ENCODE measurements at regions of chr2 and their contacts with region 1.

Region 1: GRCh38 chr2:100562732-100563720 is at the start of gene PDCL3:
- DNase-seq: peak; percentile 99
- ATAC-seq: peak; percentile 97
- H3K4me3 ChIP-seq: peak within 1 kb of the TSS; percentile 73
- H3K27ac ChIP-seq: peak within 1 kb of the TSS; percentile 94
- H3K4me1 ChIP-seq: peaks cover 7% of the 10 kb centered on the region
- H3K27me3 ChIP-seq: no peaks in the 10 kb centered on the region
- CTCF ChIP-seq: 0 out of 2 replicates have a peak, but pooled peaks have one; percentile 3
- POLR2A ChIP-seq: no peak; the same call in 1 of the 2 replicates
- RAD21 ChIP-seq: no peak
- total RNA-seq, gene PDCL3: 9.5 and 22.8 TPM in 2 replicates

Region 2: DNA sequence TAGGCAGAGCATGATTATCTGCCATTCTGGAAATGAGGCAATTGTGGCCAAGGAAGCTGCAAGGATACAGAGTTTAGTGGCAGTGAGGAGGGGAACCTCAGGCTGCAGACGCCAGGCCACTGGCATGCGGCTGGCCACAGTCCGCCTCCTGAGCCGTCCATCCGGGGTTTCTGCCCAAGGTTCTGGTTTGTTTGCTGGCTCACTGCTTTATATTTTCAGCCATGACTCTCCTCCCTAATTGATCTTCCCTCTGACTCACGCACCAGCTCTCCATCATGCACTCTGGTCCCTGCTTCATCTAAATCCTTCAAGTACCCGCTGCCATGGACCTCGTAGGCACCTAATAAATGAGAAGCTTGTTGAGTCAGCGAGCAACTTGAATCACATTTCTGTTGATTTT is 965.4 kb before region 1 on chr2:
- CTCF ChIA-PET with region 1: no interaction called
- POLR2A ChIA-PET with region 1: interaction called, 10 read pairs
- dilution Hi-C with region 1: no loop called
- in situ Hi-C with region 1: no loop called
- intact Hi-C with region 1: no loop called
- DNase-seq: peak; percentile 71
- ATAC-seq: peak; percentile 18; the same call in 1 of the 2 replicates
- H3K4me3 ChIP-seq: no peak overlapping the region
- H3K27ac ChIP-seq: no peak overlapping the region
- H3K4me1 ChIP-seq: peaks cover 14% of the 10 kb centered on the region
- H3K27me3 ChIP-seq: no peaks in the 10 kb centered on the region
- CTCF ChIP-seq: no peak
- POLR2A ChIP-seq: no peak
- RAD21 ChIP-seq: no peak

Region 3: GRCh38 chr2:100142393-100142792 is 420.6 kb before region 1 on chr2 and contains the start of gene AFF3:
- CTCF ChIA-PET with region 1: no interaction called
- POLR2A ChIA-PET with region 1: no interaction called
- dilution Hi-C with region 1: no loop called
- in situ Hi-C with region 1: no loop called
- intact Hi-C with region 1: no loop called
- DNase-seq: no peak
- ATAC-seq: no peak
- H3K4me3 ChIP-seq: no peak within 1 kb of the TSS
- H3K27ac ChIP-seq: no peak within 1 kb of the TSS
- H3K4me1 ChIP-seq: no peaks in the 10 kb centered on the region
- H3K27me3 ChIP-seq: peaks cover 16% of the 10 kb centered on the region
- CTCF ChIP-seq: no peak
- POLR2A ChIP-seq: no peak
- RAD21 ChIP-seq: no peak
- total RNA-seq, gene AFF3: 13.9 and 14.3 TPM in 2 replicates

Region 4: GRCh38 chr2:100242891-100243619 is 320.0 kb before region 1 on chr2:
- CTCF ChIA-PET with region 1: no interaction called
- POLR2A ChIA-PET with region 1: no interaction called
- dilution Hi-C with region 1: no loop called
- in situ Hi-C with region 1: no loop called
- intact Hi-C with region 1: no loop called
- DNase-seq: peak; percentile 70
- ATAC-seq: peak; percentile 92
- H3K4me3 ChIP-seq: no peak overlapping the region
- H3K27ac ChIP-seq: peak overlapping the region; percentile 23; the same call in 1 of the 2 replicates
- H3K4me1 ChIP-seq: peaks cover 16% of the 10 kb centered on the region
- H3K27me3 ChIP-seq: no peaks in the 10 kb centered on the region
- CTCF ChIP-seq: peak; percentile 83
- POLR2A ChIP-seq: no peak
- RAD21 ChIP-seq: peak; percentile 97

Region 5: DNA sequence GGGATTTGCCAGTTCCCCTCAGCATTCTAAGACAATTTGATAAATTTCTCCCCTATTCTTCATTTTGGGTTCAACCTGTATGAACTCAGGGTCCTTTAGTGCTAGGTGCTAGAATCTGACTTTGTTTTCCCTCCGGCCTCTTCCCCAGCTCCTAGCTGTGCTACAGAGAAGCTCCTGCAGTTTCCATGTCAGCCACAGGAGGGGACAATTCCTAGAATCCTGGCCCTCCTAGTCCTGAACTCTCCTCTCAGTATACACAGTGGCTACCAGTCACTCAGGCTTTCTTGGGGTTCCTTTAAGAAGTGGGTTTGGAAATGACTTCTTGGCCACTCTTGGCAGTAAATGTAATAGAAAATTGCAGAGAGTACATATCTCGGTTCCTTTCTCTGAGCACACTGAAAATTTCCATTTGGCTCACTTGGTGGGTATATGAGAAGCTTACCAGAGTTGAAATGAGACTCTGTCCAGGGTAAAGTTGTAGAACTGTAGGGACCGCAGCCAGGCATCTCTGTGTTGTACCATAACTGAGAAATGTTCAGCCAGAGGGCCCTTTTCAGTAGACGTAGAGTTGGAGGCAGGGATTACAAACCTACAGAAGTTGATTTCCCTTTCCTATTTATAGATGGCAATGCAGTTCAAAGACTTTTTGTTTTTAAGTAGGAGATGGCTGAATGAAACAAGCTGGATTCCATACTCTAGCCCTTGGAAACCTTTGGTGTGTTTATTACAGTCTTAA is 140.5 kb before region 1 on chr2:
- CTCF ChIA-PET with region 1: no interaction called
- POLR2A ChIA-PET with region 1: no interaction called
- dilution Hi-C with region 1: no loop called
- in situ Hi-C with region 1: no loop called
- intact Hi-C with region 1: loop called (anchors 2 kb)
- DNase-seq: peak; percentile 36
- ATAC-seq: peak; percentile 86
- H3K4me3 ChIP-seq: no peak overlapping the region
- H3K27ac ChIP-seq: no peak overlapping the region
- H3K4me1 ChIP-seq: no peaks in the 10 kb centered on the region
- H3K27me3 ChIP-seq: peaks cover 21% of the 10 kb centered on the region
- CTCF ChIP-seq: peak; percentile 50
- POLR2A ChIP-seq: no peak
- RAD21 ChIP-seq: 0 out of 2 replicates have a peak, but pooled peaks have one; percentile 17

Region 6: GRCh38 chr2:100577777-100578176 is 14.8 kb after region 1 on chr2:
- CTCF ChIA-PET with region 1: no interaction called
- POLR2A ChIA-PET with region 1: interaction called, 10 read pairs
- dilution Hi-C with region 1: no loop called
- in situ Hi-C with region 1: no loop called
- intact Hi-C with region 1: no loop called
- DNase-seq: no peak
- ATAC-seq: no peak
- H3K4me3 ChIP-seq: no peak overlapping the region
- H3K27ac ChIP-seq: no peak overlapping the region
- H3K4me1 ChIP-seq: no peaks in the 10 kb centered on the region
- H3K27me3 ChIP-seq: no peaks in the 10 kb centered on the region
- CTCF ChIP-seq: no peak
- POLR2A ChIP-seq: no peak
- RAD21 ChIP-seq: no peak

Region 7: DNA sequence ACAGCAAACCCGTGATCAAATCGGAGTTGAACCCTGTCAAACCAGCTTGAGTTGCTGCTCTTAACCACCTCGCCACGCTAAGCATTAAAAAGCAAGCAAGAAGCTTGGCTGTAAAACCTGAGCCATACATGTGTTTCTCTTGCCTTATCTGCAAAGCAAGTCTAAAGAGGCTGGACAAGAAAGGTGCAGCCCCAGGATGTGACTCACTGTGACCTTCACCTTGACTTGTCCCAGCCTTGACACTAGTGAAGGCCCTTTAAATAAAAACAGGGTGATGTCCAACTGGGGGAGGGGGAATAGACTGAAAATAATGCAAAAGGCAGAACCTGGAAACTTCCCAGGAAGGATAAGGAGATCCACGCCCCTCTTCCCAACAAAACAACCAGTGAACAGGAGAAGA is 129.4 kb after region 1 on chr2:
- CTCF ChIA-PET with region 1: no interaction called
- POLR2A ChIA-PET with region 1: no interaction called
- dilution Hi-C with region 1: no loop called
- in situ Hi-C with region 1: no loop called
- intact Hi-C with region 1: no loop called
- DNase-seq: no peak
- ATAC-seq: no peak
- H3K4me3 ChIP-seq: no peak overlapping the region
- H3K27ac ChIP-seq: no peak overlapping the region
- H3K4me1 ChIP-seq: no peaks in the 10 kb centered on the region
- H3K27me3 ChIP-seq: peaks cover 13% of the 10 kb centered on the region
- CTCF ChIP-seq: no peak
- POLR2A ChIP-seq: no peak
- RAD21 ChIP-seq: no peak

Region 8: DNA sequence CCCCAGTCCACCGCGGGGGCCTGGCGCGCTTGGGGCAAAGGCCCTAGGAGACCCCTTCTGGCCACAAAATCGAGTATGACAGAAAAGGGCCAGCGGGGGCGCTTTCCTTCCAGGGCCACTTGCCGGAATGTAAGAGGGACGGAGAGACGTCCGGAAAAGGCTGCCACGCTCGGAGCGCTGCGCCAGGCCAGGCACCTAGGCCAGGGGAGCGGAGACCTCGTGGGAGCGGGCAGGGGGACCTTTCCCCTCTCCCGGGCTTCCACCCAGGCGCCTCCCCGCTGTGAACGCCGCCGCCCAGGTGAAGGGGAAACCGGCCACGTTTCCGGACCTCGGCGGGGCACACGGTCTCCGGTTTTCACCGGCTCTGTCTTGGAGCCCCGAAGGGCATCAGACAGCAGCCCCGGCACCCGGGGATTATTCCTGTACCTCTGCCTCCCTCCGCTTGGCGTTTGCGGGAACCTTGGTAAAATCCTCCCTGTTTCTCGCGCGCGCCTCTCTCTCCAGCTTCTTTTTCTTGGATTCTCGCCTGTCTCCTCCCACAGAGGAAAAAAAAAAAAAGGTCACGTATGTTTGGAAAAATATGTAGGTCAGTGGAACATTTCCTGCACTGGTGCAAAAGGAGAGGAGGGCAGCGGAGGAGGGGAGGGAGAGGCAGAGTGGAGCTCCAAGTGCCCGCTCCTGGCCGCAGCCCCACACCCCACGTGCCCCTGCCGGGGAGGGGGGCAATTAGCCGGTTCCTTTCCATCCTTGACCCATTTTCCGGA is 255.8 kb after region 1 on chr2:
- CTCF ChIA-PET with region 1: no interaction called
- POLR2A ChIA-PET with region 1: no interaction called
- dilution Hi-C with region 1: no loop called
- in situ Hi-C with region 1: no loop called
- intact Hi-C with region 1: no loop called
- DNase-seq: peak; percentile 72
- ATAC-seq: peak; percentile 40
- H3K4me3 ChIP-seq: peak overlapping the region; percentile 70
- H3K27ac ChIP-seq: peak overlapping the region; percentile 33; the same call in 1 of the 2 replicates
- H3K4me1 ChIP-seq: peaks cover 2% of the 10 kb centered on the region; the same call in 1 of the 2 replicates
- H3K27me3 ChIP-seq: no peaks in the 10 kb centered on the region
- CTCF ChIP-seq: peak; percentile 32
- POLR2A ChIP-seq: no peak; the same call in 1 of the 2 replicates
- RAD21 ChIP-seq: peak; percentile 17